ENCODE measurements at regions of chr19 and their contacts with region 1.

Region 1: DNA sequence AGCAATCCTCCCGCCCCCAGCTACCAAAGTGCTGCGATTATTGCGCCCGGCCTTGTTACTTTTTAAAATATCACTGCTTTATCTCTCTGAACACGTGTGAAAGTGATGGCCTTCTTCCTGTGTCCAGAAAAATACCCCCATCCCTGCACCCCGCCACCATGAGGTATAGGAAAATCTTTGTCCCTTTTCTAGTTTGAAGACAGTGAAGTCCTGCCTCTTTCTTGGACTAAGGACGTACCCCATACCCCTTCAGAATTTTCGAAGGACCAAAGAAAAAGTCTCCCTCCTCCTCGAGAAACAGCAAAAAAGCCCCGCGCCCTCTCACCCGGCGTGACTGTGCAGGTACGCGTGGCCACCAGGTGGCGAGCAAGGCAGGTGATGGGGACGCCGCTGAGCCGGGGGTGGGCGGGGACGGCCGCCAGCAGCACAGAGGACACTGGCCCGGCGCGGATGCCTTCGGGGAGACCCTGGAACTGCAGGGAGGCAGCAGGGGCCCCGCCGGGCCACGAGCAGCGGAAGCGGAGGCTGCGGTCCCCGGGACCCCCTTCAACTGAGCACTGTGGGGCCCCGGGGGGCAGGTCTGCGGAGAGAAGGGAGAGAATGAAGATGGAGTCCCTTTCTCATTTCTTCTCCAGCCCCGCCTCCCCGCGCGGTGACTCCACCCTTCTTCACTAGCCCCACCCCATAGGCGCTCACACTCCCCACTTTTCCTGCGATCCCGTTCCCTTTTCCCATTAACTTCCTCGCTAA is 3.2 kb downstream of the VSIG10L start:
- DNase-seq: peak; percentile 88
- ATAC-seq: peak; percentile 76
- H3K4me3 ChIP-seq: peak overlapping the region; percentile 72
- H3K27ac ChIP-seq: peak overlapping the region; percentile 14; the same call in 1 of the 2 replicates
- H3K4me1 ChIP-seq: peaks cover 16% of the 10 kb centered on the region; the same call in 1 of the 2 replicates
- H3K27me3 ChIP-seq: no peaks in the 10 kb centered on the region
- CTCF ChIP-seq: peak; percentile 98

Region 2: GRCh38 chr19:51026554-51026831 is 312.2 kb before region 1 on chr19 and contains the start of gene KLK11:
- CTCF ChIA-PET with region 1: no interaction called
- POLR2A ChIA-PET with region 1: no interaction called
- intact Hi-C with region 1: no loop called
- DNase-seq: peak; percentile 32
- ATAC-seq: peak; percentile 33; the same call in 1 of the 2 replicates
- H3K4me3 ChIP-seq: no peak within 1 kb of the TSS
- H3K27ac ChIP-seq: no peak within 1 kb of the TSS
- H3K4me1 ChIP-seq: peaks cover under 1% of the 10 kb centered on the region
- H3K27me3 ChIP-seq: peaks cover 3% of the 10 kb centered on the region; the same call in 1 of the 2 replicates
- CTCF ChIP-seq: no peak
- total RNA-seq, gene KLK11: 0.23 TPM in 1 of 2 replicates, not detected in the other

Region 3: DNA sequence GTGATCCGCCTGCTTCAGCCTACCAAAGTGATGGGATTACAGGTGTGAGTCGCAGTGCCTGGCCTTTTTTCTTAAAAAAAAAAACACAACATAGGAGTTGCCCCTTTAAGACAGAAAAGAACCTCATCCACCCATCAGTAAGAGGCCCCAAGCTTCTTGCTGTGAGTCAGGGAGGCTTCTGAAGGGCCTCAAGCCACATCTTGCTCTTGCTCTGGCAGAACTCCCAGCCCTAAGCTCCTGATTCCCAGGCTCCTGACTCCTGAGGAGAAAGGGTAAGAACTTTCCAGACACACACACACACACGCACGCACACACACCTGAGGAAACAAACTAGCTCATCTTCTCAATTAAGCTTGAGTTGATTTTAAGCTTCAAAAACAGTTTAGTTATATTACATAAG is 20.6 kb after region 1 on chr19:
- CTCF ChIA-PET with region 1: interaction called, 12 read pairs
- POLR2A ChIA-PET with region 1: interaction called, 20 read pairs
- intact Hi-C with region 1: no loop called
- DNase-seq: peak; percentile 70
- ATAC-seq: peak; percentile 5; the same call in 1 of the 2 replicates
- H3K4me3 ChIP-seq: no peak overlapping the region
- H3K27ac ChIP-seq: peak overlapping the region; percentile 55
- H3K4me1 ChIP-seq: peaks cover 42% of the 10 kb centered on the region
- H3K27me3 ChIP-seq: no peaks in the 10 kb centered on the region
- CTCF ChIP-seq: no peak

Region 4: GRCh38 chr19:51393959-51394836 is 55.5 kb after region 1 on chr19:
- CTCF ChIA-PET with region 1: interaction called, 8 read pairs
- POLR2A ChIA-PET with region 1: interaction called, 7 read pairs
- intact Hi-C with region 1: loop called (anchors 1 kb)
- DNase-seq: peak; percentile 100
- ATAC-seq: peak; percentile 93
- H3K4me3 ChIP-seq: peak overlapping the region; percentile 66
- H3K27ac ChIP-seq: peak overlapping the region; percentile 68
- H3K4me1 ChIP-seq: peaks cover 18% of the 10 kb centered on the region
- H3K27me3 ChIP-seq: no peaks in the 10 kb centered on the region
- CTCF ChIP-seq: peak; percentile 59

Region 5: GRCh38 chr19:51439021-51439465 is 100.3 kb after region 1 on chr19:
- CTCF ChIA-PET with region 1: interaction called, 3 read pairs
- POLR2A ChIA-PET with region 1: no interaction called
- intact Hi-C with region 1: loop called (anchors 1 kb)
- DNase-seq: peak; percentile 46
- ATAC-seq: peak; percentile 25
- H3K4me3 ChIP-seq: no peak overlapping the region
- H3K27ac ChIP-seq: no peak overlapping the region
- H3K4me1 ChIP-seq: peaks cover 17% of the 10 kb centered on the region
- H3K27me3 ChIP-seq: peaks cover 72% of the 10 kb centered on the region
- CTCF ChIP-seq: peak; percentile 74

Region 6: GRCh38 chr19:51460164-51460992 is 121.6 kb after region 1 on chr19:
- CTCF ChIA-PET with region 1: no interaction called
- POLR2A ChIA-PET with region 1: no interaction called
- intact Hi-C with region 1: no loop called
- DNase-seq: peak; percentile 20
- ATAC-seq: no peak
- H3K4me3 ChIP-seq: no peak overlapping the region
- H3K27ac ChIP-seq: no peak overlapping the region
- H3K4me1 ChIP-seq: no peaks in the 10 kb centered on the region
- H3K27me3 ChIP-seq: peaks cover 61% of the 10 kb centered on the region
- CTCF ChIP-seq: no peak

Region 7: DNA sequence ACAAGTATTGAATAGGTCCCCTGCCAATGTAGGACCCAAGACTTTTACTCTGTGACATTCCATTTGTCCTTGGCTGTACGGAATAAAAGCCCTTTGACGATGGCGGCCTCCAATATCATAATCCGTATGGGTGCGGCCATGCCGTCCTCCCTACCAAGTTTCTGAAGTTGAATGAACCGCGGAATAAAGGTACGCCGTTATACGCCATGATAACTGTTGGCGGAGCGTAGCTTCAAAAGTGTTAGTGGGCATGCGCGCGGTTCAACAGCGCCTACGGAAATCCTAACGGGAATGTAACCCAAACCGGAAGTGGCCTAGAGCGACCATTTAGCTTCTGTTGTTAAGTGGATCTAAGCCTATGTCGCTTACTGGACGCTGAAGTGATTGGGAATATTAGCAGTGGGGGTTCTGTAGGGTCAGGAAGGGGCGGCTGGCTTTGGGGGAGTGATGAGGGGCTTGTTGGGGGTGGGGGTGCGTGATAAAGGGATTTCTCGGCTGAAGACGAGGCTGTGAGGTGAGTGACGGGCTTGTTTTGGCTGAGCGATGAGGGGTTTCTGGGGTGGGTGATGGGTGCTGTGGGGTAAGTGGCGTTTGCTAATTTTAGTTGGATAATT is 232.3 kb after region 1 on chr19 and contains the start of gene ZNF175:
- CTCF ChIA-PET with region 1: no interaction called
- POLR2A ChIA-PET with region 1: no interaction called
- intact Hi-C with region 1: loop called (anchors 1 kb)
- DNase-seq: peak; percentile 100
- ATAC-seq: peak; percentile 65
- H3K4me3 ChIP-seq: peak within 1 kb of the TSS; percentile 81
- H3K27ac ChIP-seq: peak within 1 kb of the TSS; percentile 75
- H3K4me1 ChIP-seq: peaks cover 71% of the 10 kb centered on the region
- H3K27me3 ChIP-seq: no peaks in the 10 kb centered on the region
- CTCF ChIP-seq: no peak
- total RNA-seq, gene ZNF175: 7.5 and 8.5 TPM in 2 replicates

Region 8: GRCh38 chr19:51688672-51689571 is 350.2 kb after region 1 on chr19:
- CTCF ChIA-PET with region 1: no interaction called
- POLR2A ChIA-PET with region 1: no interaction called
- intact Hi-C with region 1: no loop called
- DNase-seq: peak; percentile 94
- ATAC-seq: peak; percentile 73
- H3K4me3 ChIP-seq: peak overlapping the region; percentile 76
- H3K27ac ChIP-seq: peak overlapping the region; percentile 62
- H3K4me1 ChIP-seq: peaks cover 42% of the 10 kb centered on the region
- H3K27me3 ChIP-seq: no peaks in the 10 kb centered on the region
- CTCF ChIP-seq: no peak